Colonic mucosa (tissue), 4 donors: ENCODE measurements at regions of chr2 and their contacts with region 1.

Region 1: DNA sequence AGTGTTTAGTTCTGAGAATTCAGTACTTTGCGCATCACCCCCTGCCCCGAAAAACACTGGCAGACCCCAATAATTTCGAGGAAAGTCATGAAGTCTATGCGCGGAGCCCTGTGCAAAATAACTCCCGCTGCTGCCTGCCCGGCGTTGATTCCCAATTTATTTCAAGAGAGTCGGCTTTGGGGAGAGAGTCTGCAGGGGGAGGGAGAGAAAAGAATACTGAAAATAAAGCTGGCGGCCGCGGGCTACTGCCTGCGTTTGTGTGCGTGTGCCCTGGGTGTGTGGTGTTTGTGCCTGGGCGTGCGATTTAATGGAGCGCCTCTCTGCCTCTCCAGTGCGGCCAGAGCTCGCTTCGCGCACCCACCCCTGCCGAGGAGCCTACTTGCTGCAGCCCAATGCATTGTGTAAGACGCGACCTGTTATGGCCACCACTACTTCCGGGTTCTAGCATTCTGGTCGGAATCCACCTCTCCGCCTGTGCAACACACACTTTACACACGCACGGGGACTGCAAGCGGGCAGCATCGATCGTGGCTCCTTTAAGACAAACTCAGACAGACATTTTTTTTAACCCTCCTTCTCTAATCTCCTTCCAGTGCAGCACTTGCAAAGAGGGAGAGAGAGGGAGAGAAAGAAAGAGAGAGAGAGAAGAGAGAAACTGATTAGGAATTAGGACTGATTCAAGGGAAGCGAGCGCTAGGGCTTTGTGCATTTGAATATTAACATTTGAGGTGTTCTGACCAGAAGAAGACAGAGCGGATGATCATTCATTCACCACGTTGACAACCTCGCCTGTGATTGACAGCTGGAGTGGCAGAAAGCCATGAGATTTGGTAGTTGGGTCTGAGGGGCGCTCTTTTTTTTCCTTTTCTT is at the start of gene MEIS1:
- DNase-seq: peak; percentile 87
- H3K4me3 ChIP-seq: peak within 1 kb of the TSS; percentile 55
- H3K27ac ChIP-seq: peak within 1 kb of the TSS; percentile 87
- H3K4me1 ChIP-seq: no peaks in the 10 kb centered on the region
- H3K27me3 ChIP-seq: peaks cover 17% of the 10 kb centered on the region
- CTCF ChIP-seq: no peak
- total RNA-seq, gene MEIS1: 8.9 to 23.1 TPM

Region 2: DNA sequence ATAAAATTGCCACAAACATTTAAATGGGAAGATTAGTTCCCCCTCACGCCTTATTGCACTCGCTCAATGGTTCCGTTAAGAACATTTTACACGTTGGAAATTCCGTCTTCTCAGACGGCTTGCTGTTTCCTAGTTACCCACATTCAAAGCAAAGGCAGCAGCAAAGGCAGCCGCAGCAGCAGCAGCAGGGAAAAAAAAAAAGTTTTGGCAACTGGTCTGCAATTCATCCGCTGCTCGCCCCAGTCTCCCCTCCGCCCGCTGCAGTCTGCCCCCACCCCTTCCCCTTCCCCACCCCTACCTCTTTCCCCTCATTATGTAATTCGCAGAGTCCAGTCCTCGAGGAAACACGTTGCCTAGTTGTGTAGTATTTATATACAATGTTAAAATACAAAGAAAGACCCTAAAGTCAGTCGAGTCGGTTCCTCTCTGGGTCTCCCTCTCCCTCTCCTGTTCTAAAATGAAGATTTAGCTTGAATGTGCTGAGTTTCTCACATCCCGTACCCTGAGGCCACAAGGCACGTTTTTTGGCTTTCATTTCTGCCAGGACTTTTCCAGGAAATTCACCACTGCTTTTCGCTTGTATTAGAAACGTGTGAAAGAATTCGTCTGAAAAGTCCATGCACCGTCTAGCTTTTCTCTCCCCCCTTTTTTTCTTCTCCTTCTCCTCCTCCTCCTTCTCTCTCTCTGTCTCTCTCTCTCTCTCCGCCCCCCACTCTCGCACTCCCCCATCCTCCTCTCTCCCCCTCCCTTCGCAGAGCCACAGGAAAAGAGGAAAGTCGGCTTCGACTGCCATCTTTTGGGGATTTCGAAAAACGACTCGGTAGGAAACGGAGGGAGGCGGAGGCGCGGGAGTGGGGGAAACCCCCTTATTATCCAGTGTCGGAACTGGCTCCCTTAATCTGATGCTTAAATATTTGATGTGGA is 140.0 kb after region 1 on chr2:
- intact Hi-C with region 1: loop called (anchors 5 kb)
- DNase-seq: peak; percentile 67
- H3K4me3 ChIP-seq: peak overlapping the region; percentile 31
- H3K27ac ChIP-seq: peak overlapping the region; percentile 61
- H3K4me1 ChIP-seq: peaks cover 17% of the 10 kb centered on the region
- H3K27me3 ChIP-seq: peaks cover 57% of the 10 kb centered on the region
- CTCF ChIP-seq: peak; percentile 26

Region 3: GRCh38 chr2:66699793-66700676 is 265.1 kb after region 1 on chr2:
- intact Hi-C with region 1: loop called (anchors 10 kb)
- DNase-seq: no peak
- H3K4me3 ChIP-seq: no peak overlapping the region
- H3K27ac ChIP-seq: no peak overlapping the region
- H3K4me1 ChIP-seq: no peaks in the 10 kb centered on the region
- H3K27me3 ChIP-seq: no peaks in the 10 kb centered on the region
- CTCF ChIP-seq: no peak

Region 4: DNA sequence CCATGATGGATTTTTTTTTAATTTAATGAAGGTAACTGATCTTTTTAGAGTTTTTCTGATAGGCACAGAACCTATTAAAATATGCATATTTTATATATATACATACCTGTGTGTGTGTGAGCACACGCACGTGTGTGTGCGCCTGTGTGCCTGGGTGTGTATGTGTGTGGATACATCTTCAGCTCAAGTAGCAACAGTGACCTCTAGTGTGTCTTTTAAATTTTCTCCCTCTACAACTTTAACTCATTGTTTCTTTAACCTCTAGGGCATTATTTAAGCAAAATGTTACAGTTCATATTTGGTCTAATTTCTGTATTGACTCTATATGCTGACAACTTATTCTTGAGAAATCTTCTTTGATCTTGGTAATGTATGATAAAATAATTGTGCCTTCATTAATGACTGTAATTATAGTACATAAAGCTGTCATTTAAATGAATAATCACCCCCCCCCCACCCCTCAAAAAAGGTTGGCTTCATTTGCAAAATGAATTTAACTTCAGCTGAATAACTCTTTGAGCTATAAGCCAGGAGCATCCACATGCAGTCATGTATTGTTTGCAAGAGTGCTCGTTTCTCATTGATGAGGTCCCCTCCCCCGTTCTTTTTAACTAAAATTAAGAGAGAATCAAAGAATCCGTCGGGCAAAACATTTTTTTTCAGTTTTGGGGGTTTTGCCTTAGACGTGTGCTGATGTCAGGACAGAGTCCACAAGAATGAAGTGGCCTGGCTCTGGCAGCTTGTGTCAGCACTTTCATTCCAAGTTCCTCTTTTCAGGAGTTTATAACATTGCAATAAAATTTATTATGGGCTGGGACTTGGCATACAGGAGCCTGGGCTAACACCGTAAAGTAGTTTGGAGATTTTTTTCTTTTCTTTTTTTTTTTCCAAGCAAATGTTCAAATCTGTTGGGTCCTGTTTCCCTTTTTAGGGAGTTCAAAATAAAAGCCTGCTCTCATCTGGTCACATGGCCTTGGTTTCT is 1042.2 kb after region 1 on chr2:
- intact Hi-C with region 1: loop called (anchors 10 kb)
- DNase-seq: peak; percentile 57
- H3K4me3 ChIP-seq: no peak overlapping the region
- H3K27ac ChIP-seq: no peak overlapping the region
- H3K4me1 ChIP-seq: peaks cover 5% of the 10 kb centered on the region
- H3K27me3 ChIP-seq: no peaks in the 10 kb centered on the region
- CTCF ChIP-seq: no peak